ENCODE measurements at regions of chr11 and their contacts with region 1.

Region 1: DNA sequence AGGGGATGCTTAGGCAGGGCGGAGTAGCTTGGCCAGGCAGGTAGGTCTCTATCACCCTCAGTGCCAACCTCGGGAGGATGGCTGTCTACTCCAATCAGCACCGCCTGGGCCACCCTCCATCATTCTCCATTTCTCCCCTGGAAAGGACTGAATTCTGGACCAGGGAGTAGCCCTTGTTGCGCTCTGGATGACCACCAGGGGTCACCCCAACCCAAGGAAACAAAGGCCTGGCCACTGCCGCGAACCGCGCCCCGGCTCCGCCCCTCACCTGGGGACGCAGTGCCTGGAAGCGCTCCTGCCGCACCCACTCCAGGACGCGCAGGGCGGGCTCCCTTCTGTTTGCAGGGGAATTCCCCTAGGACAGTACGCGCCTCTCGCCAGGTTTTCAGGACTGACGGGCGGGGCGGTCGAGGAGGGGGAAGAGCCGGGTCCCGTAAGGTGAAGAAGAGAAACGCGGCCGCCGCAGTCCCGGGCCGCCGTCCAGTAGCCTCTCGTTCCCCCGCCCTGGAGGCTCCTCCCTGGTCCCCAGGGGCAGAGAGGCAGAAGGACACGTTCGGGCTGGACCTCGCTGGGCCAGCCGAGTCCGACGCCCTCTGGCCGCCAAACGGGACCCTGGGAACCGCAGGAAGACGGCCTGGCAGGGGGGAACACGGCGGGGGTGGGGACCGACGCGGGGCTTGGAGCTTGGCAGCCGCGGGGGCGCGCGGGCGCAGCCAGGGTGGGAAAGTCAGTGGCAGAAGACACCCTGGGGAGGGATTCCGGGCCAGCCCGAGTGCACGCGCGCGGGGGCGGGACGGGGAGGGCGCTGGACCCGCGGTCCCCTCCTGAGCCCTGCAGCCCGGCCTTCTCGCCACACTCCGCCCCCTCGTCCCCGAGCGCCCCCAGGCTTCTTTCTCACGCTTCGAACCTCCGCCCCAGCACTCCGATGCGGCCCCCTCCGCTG is 7.1 kb downstream of the SCN4B start:
- DNase-seq: peak; percentile 73 to 83 (median 79)
- H3K4me3 ChIP-seq: peak overlapping the region; percentile 60 to 85 (median 70)
- H3K27ac ChIP-seq: no peak overlapping the region
- H3K4me1 ChIP-seq: peaks cover 3 to 21% (median 6%) of the 10 kb centered on the region in 4 experiments
- H3K27me3 ChIP-seq: peaks cover 0 to 12% (median 0%) of the 10 kb centered on the region in 5 experiments

Region 2: DNA sequence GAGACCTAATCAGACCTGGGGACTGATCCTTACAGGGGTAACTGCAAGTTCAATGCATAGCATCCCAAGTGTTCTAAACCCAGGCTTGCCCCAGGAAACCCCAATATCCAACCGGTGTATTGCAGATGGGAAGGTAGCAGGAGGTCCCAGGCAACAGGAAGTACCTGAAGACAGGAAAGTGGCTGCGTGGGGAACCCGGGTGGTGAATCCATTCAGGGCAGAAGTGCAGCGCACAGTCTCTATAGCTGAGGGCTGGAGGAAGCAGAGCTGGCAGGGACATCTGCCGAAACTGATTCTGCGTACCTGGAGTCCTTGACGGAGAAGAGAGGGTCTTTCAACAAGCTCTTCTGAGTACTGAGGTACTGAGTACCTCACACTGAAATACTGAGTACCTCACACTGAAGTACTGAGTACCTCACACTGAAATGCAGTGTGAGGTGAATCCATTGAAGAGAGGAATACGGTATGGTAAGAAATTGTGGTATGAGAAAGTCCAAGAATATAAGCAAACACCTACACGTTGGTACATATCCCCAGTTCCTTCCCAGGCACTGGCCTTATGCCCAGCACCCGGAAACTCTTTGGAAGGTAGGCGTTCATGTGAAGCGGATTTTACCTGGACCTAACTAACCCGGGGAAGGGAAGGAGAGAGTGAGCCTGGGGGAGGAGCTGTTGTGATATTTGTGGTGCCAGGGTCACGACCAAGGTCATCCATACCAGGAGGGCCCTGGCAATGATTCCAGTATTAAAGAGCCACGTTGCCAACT is 13.0 kb before region 1 on chr11:
- CTCF ChIA-PET with region 1: interaction called, 13 read pairs
- POLR2A ChIA-PET with region 1: no interaction called
- DNase-seq: no peak
- H3K4me3 ChIP-seq: no peak overlapping the region
- H3K27ac ChIP-seq: no peak overlapping the region
- H3K4me1 ChIP-seq: no peaks in the 10 kb centered on the region
- H3K27me3 ChIP-seq: peaks cover 0 to 6% (median 0%) of the 10 kb centered on the region in 5 experiments

Region 3: DNA sequence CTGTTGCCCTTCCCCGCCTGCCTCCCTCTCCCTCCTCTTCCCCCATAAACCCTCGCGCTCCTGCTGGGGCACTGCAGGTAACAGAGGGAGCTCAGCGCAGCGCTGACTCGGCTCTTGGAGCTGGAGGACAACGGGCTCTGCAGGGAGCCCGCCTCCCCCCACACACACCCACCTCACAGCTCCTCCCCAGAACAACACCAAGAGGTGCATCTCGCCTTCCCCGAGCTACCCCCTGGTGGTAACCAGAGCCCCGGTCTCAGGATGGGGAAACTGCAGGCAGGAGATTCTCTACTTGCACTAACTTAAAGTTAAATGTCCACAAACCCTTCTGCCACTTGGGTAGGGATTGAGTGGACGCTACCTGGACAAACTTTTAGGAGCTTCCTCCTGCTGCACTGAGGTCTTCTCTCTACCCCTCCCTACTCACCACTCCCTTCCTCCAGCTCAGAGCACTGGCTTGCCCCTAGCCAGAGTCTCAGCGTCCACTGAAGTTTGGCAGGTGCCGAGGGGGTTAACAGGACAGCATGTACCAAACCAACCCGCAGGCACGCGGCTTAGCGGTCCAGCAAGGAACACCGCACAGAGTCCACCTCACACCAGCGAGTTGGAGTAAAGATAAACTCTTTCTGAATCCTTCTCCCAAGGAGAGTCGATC is 11.1 kb after region 1 on chr11:
- CTCF ChIA-PET with region 1: interaction called, 29 read pairs
- POLR2A ChIA-PET with region 1: no interaction called
- DNase-seq: peak; percentile 46 to 70 (median 68)
- H3K4me3 ChIP-seq: peak overlapping the region in 1 of 7 experiments; percentile 28
- H3K27ac ChIP-seq: no peak overlapping the region
- H3K4me1 ChIP-seq: peaks cover 0 to 24% (median 16%) of the 10 kb centered on the region in 4 experiments
- H3K27me3 ChIP-seq: peaks cover 0 to 68% (median 36%) of the 10 kb centered on the region in 5 experiments

Region 4: DNA sequence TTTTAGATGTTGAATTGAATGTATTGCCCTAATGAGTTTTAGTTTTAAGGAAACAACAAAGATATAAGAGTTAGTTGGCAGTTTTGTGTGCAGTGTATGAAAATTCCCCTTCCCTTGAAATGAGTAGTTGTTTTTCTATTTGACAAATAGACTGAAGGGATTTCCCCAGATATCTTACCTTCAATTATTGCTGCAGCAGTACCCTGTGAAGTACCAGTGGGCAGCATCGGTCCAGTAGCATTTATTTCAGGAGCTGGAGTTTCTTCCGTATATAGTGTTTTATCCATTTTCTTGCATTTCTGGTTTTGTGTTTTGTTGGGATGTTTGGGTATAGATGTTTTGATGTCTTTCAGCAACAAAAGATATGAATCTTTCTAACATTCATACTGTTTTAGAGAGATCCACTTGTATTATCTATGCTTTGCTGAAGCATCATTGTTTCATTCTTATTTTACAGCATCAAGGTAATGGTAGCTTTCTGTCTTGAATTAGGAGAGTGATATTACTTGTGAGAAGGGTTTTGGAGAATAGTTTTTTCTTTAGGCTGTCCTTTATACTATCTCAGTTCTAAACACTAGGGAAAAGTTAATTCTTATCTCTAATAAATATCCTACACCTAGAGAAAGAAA is 298.1 kb after region 1 on chr11:
- CTCF ChIA-PET with region 1: no interaction called
- POLR2A ChIA-PET with region 1: no interaction called
- DNase-seq: peak in 1 of 3 donors; percentile 12
- H3K4me3 ChIP-seq: no peak overlapping the region
- H3K27ac ChIP-seq: peak overlapping the region in 1 of 2 experiments; percentile 11
- H3K4me1 ChIP-seq: peaks cover 27 to 52% (median 33%) of the 10 kb centered on the region in 4 experiments
- H3K27me3 ChIP-seq: no peaks in the 10 kb centered on the region

Region 5: GRCh38 chr11:118552341-118552740 is 406.8 kb after region 1 on chr11:
- CTCF ChIA-PET with region 1: no interaction called
- POLR2A ChIA-PET with region 1: no interaction called
- DNase-seq: no peak
- H3K4me3 ChIP-seq: no peak overlapping the region
- H3K27ac ChIP-seq: no peak overlapping the region
- H3K4me1 ChIP-seq: no peaks in the 10 kb centered on the region
- H3K27me3 ChIP-seq: no peaks in the 10 kb centered on the region